Gastrocnemius medialis (tissue), 4 donors: ENCODE measurements at regions of chr6 and their contacts with region 1.

Region 1: DNA sequence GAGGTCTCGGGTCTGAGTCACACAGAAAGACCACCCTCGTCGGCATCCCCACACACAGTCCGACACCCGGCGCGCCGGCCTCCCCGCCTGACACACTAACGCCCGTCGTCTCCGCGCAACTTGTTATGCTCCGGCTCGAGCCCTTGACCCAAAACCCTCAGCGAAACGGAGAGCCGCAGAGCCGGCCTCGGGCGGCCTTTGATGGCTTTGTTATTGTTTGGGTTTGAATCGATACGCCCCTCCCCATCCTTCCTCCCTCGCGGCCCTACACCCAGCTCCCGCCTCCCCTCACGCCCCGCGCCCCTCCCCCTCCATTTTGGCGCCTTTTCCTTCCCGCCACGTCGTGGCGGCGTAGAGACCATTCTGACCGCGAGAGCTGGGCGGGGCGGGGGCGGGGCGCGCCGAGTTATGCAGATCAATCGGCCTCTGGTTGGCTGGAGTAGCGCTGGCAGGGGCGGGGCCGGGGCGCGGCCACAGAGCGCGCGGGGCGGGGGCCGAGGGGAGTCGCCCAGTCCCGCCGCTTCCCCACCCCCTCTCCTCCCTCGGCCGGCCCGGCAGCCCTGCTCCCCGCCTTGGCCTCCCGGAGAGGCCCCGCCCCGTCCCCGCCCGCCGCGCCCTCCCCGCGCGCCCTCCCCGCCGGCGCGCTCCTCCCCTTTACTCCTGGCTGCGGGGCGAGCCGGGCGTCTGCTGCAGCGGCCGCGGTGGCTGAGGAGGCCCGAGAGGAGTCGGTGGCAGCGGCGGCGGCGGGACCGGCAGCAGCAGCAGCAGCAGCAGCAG is at the start of gene PIM1:
- DNase-seq: peak; percentile 98 to 99
- ATAC-seq: peak; percentile 68 to 70
- H3K4me3 ChIP-seq: peak within 1 kb of the TSS; percentile 69 to 97 (median 90)
- H3K27ac ChIP-seq: peak within 1 kb of the TSS; percentile 92 to 95 (median 93)
- H3K4me1 ChIP-seq: peaks cover 13 to 27% of the 10 kb centered on the region in 2 donors
- H3K27me3 ChIP-seq: no peaks in the 10 kb centered on the region
- CTCF ChIP-seq: no peak
- POLR2A ChIP-seq: peak; percentile 96
- total RNA-seq, gene PIM1: 5.0 to 23.0 (median 13.0) TPM

Region 2: DNA sequence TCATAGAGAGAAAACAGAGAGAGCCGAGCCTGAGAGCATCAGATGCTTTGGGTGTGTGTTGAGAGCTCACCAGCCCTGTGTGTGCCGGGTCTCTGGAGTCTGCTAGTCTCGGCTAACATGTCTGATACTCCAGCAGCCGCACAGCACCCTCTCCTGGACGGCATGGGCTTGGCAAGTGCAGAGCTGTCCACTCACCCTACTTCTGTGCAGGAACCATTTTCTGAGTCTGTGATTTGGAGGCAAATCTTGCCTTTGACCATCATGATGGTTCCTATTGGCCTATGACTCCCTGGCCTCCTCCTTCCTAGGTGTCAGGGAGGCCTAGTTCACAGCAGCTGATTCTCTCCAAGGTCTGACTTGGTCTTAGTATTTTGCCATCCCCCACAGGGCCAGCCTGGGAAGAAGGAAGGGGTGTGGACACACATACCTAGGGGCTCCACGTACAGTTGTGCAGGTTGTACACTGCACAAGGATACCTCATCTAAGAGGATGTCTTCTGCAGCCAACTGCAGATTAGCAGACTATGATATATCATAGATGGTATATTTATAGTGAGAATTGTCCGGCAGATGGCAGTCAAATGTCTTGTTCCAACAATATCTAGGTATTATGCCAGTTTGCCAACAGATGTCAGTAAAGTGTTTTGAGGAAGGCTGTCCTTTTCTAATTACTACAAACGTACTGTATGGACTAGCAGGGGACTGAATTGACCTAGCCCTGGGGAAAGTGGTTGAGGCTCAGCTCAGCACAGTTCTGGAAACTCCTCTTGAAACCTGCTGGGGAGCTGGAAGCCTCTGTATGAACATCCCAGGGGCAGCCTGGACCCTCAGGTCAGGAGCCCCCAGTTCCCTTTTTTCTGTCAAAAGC is 151.3 kb before region 1 on chr6:
- in situ Hi-C with region 1: no loop called
- intact Hi-C with region 1: loop called (anchors 1 kb)
- DNase-seq: peak; percentile 79 to 90
- ATAC-seq: peak; percentile 96 to 98
- H3K4me3 ChIP-seq: no peak overlapping the region
- H3K27ac ChIP-seq: peak overlapping the region; percentile 40 to 67 (median 56)
- H3K4me1 ChIP-seq: peaks cover 9 to 11% of the 10 kb centered on the region in 2 donors
- H3K27me3 ChIP-seq: no peaks in the 10 kb centered on the region
- CTCF ChIP-seq: peak; percentile 84 to 95 (median 91)
- POLR2A ChIP-seq: no peak

Region 3: GRCh38 chr6:37029249-37029971 is 140.3 kb before region 1 on chr6:
- in situ Hi-C with region 1: no loop called
- intact Hi-C with region 1: loop called (anchors 1 kb)
- DNase-seq: peak; percentile 41 to 69
- ATAC-seq: peak; percentile 77 to 82
- H3K4me3 ChIP-seq: no peak overlapping the region
- H3K27ac ChIP-seq: no peak overlapping the region
- H3K4me1 ChIP-seq: no peaks in the 10 kb centered on the region
- H3K27me3 ChIP-seq: no peaks in the 10 kb centered on the region
- CTCF ChIP-seq: peak in 4 of 5 experiments; percentile 63 to 82 (median 76)
- POLR2A ChIP-seq: no peak

Region 4: GRCh38 chr6:37051138-37052026 is 118.3 kb before region 1 on chr6:
- in situ Hi-C with region 1: loop called in 3 of 4 experiments (anchors 5 kb)
- intact Hi-C with region 1: loop called (anchors 1 kb)
- DNase-seq: peak; percentile 85 to 87
- ATAC-seq: peak; percentile 87 to 91
- H3K4me3 ChIP-seq: no peak overlapping the region
- H3K27ac ChIP-seq: peak overlapping the region in 1 of 4 donors; percentile 13
- H3K4me1 ChIP-seq: peaks cover 6 to 10% of the 10 kb centered on the region in 2 donors
- H3K27me3 ChIP-seq: no peaks in the 10 kb centered on the region
- CTCF ChIP-seq: peak; percentile 95 to 98 (median 97)
- POLR2A ChIP-seq: no peak

Region 5: DNA sequence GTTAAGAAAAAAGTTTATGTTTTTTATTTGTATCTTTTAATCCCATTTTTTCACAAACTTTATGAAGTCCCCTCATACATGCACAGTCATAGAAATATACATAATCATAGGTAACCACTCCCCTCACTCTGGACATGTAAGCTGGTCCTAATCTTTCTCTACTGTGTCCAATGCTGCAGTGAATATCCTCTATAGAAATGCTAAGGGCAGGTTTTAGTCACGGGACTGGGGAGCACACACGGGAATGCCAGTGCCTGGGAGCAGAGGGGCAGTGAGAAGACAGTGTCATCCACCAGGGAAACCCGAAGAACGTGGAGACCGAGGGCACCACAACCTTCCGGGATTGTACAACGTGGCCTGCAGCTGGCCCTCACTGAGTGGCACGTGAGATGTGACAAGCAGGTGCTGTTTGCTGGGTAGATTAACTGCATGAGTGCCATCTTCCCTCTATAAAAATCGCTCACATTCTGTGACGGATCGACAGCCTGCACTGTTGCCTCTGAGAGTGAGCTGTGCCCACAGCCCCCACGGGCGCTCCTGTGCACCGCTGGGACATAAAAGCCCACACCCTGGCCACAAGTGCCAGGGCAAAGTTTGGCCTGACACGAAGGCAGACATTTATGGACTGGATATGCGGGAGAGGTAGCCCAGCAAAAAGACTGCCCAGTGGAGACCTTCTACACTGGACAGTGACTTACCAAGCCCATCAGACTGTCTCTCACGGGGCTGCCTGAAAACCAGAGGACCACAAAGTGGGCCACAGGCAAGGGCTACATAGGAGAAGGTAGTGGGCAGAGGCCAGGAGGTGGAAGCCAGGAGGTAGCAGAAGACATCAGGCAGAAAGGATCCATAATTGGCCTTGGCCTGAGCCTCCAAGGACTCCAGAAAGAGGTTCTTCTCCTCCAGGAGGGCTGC is 101.1 kb before region 1 on chr6:
- in situ Hi-C with region 1: no loop called
- intact Hi-C with region 1: no loop called
- DNase-seq: peak; percentile 54 to 64
- ATAC-seq: peak; percentile 84 to 89
- H3K4me3 ChIP-seq: no peak overlapping the region
- H3K27ac ChIP-seq: peak overlapping the region; percentile 14 to 56 (median 30)
- H3K4me1 ChIP-seq: peaks cover 4 to 12% of the 10 kb centered on the region in 2 donors
- H3K27me3 ChIP-seq: no peaks in the 10 kb centered on the region
- CTCF ChIP-seq: no peak
- POLR2A ChIP-seq: no peak

Region 6: DNA sequence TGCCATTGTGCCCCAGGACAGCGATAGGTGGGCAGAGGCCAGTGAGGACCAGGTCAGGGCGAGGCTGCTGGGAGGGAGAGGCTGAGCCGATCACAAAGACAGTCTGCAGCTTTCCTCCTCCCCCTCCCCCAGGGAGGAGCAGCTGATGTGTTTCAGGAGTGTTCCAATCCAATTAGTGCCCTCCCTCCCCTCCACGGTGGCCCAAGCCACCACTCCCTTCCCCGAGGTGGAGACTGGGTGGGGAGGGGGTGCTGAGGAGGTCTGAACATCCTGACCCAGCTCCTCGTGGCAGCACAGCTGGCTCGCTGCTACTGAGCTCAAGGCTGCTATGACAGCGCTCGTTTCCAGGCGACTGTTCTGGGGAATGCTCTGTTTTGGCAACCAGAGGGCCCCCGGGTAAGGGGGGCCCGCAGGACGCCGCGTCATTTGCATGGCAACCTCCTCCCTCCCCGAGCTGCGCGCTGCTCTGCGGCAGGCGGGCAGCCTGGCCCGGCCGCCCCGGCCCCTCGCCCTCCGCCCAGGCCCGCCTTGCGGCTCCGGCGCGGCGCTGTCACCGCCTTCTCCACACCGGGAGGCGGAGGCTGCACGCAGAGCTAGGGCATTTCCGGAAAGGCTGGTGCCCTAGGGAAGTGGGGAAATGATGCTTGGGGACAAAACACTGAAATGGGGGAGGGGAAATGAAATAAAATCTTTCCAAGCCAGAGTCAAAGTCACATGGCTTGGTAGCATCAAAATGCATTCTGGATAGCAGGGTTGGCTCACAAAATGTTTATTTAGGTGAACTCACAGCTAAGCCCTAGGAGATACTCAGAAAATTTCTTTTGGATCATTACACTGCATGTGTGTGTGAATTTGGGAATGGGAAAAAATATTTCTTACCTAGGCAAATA is 67.2 kb before region 1 on chr6:
- in situ Hi-C with region 1: no loop called
- intact Hi-C with region 1: loop called (anchors 1 kb)
- DNase-seq: peak; percentile 81 to 86
- ATAC-seq: peak; percentile 67 to 70
- H3K4me3 ChIP-seq: peak overlapping the region; percentile 33 to 60 (median 49)
- H3K27ac ChIP-seq: peak overlapping the region; percentile 86 to 95 (median 90)
- H3K4me1 ChIP-seq: peaks cover 27 to 40% of the 10 kb centered on the region in 2 donors
- H3K27me3 ChIP-seq: no peaks in the 10 kb centered on the region
- CTCF ChIP-seq: peak in 1 of 5 experiments; percentile 10
- POLR2A ChIP-seq: peak; percentile 62 to 66

Region 7: GRCh38 chr6:37134606-37135191 is 35.0 kb before region 1 on chr6:
- in situ Hi-C with region 1: loop called in 1 of 4 experiments (anchors 5 kb)
- intact Hi-C with region 1: loop called (anchors 1 kb)
- DNase-seq: peak; percentile 74 to 76
- ATAC-seq: peak; percentile 68 to 82
- H3K4me3 ChIP-seq: no peak overlapping the region
- H3K27ac ChIP-seq: peak overlapping the region; percentile 91 to 95 (median 93)
- H3K4me1 ChIP-seq: peaks cover 39 to 47% of the 10 kb centered on the region in 2 donors
- H3K27me3 ChIP-seq: no peaks in the 10 kb centered on the region
- CTCF ChIP-seq: no peak
- POLR2A ChIP-seq: no peak

Region 8: GRCh38 chr6:37990762-37991525 is 821.3 kb after region 1 on chr6:
- in situ Hi-C with region 1: no loop called
- intact Hi-C with region 1: no loop called
- DNase-seq: peak in 1 of 2 donors; percentile 23
- ATAC-seq: peak; percentile 74 to 83
- H3K4me3 ChIP-seq: no peak overlapping the region
- H3K27ac ChIP-seq: peak overlapping the region; percentile 46 to 65 (median 58)
- H3K4me1 ChIP-seq: peaks cover 87 to 94% of the 10 kb centered on the region in 2 donors
- H3K27me3 ChIP-seq: no peaks in the 10 kb centered on the region
- CTCF ChIP-seq: no peak
- POLR2A ChIP-seq: no peak